IMR-90 (cell line): ENCODE measurements at regions of chrX and their contacts with region 1.

Region 1: GRCh38 chrX:68828740-68829552 is at the start of gene EFNB1:
- DNase-seq: peak; percentile 96
- ATAC-seq: peak; percentile 84
- H3K4me3 ChIP-seq: peak within 1 kb of the TSS; percentile 86
- H3K27ac ChIP-seq: peak within 1 kb of the TSS; percentile 39
- H3K4me1 ChIP-seq: peaks cover 3% of the 10 kb centered on the region; the same call in 1 of the 2 replicates
- H3K27me3 ChIP-seq: peaks cover 13% of the 10 kb centered on the region
- CTCF ChIP-seq: no peak
- POLR2A ChIP-seq: peak; percentile 95
- RAD21 ChIP-seq: 0 out of 2 replicates have a peak, but pooled peaks have one; percentile 19
- total RNA-seq, gene EFNB1: 17.8 and 17.9 TPM in 2 replicates

Region 2: GRCh38 chrX:68383540-68383939 is 445.4 kb before region 1 on chrX:
- CTCF ChIA-PET with region 1: no interaction called
- POLR2A ChIA-PET with region 1: no interaction called
- dilution Hi-C with region 1: no loop called
- in situ Hi-C with region 1: no loop called
- intact Hi-C with region 1: no loop called
- DNase-seq: no peak
- ATAC-seq: no peak
- H3K4me3 ChIP-seq: no peak overlapping the region
- H3K27ac ChIP-seq: no peak overlapping the region
- H3K4me1 ChIP-seq: no peaks in the 10 kb centered on the region
- H3K27me3 ChIP-seq: no peaks in the 10 kb centered on the region
- CTCF ChIP-seq: no peak
- POLR2A ChIP-seq: no peak
- RAD21 ChIP-seq: no peak

Region 3: GRCh38 chrX:68997911-68998310 is 169.0 kb after region 1 on chrX:
- CTCF ChIA-PET with region 1: no interaction called
- POLR2A ChIA-PET with region 1: no interaction called
- dilution Hi-C with region 1: no loop called
- in situ Hi-C with region 1: no loop called
- intact Hi-C with region 1: loop called (anchors 2 kb)
- DNase-seq: peak; percentile 83
- ATAC-seq: peak; percentile 69
- H3K4me3 ChIP-seq: no peak overlapping the region
- H3K27ac ChIP-seq: no peak overlapping the region
- H3K4me1 ChIP-seq: peaks cover 11% of the 10 kb centered on the region; the same call in 1 of the 2 replicates
- H3K27me3 ChIP-seq: peaks cover 16% of the 10 kb centered on the region
- CTCF ChIP-seq: no peak
- POLR2A ChIP-seq: no peak
- RAD21 ChIP-seq: no peak

Region 4: DNA sequence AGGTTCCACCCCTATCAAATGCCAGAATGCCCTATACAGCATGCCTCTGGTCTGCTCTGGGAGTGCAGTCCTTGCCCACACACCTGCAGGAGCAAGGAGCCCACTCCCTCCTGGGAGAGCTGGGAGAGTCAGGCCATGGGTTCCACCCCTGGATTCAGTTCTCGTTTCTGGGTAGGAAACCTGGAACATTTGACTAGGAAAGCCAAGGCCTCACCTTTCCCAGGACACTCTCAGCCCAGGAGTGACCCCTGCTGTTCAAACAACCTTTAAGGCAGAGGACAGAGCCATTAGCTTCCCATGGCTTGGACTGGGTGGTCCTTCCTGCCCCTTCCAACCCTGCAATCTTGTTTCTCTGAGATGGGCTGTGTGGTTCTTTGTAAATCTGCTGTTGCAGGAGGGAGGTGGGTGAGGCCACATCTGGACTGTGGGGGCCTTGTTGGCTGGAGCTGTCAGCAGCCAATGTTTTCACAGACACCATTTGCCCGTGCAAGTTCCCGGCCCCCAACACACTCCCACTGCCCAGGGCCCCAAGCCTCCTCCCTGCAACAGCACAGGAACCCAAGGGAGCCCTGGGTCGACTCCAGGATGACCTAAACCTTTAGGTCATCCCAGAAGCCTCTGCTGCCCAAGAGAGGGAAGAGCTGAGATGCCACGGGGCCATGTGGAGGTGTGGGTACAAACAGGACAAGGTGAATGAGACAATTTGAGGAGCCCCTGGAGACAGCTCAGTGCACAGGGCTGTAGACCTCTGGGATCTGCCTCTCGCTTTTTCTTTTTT is 231.9 kb after region 1 on chrX:
- CTCF ChIA-PET with region 1: interaction called, 17 read pairs
- POLR2A ChIA-PET with region 1: no interaction called
- dilution Hi-C with region 1: no loop called
- in situ Hi-C with region 1: no loop called
- intact Hi-C with region 1: loop called (anchors 1 kb)
- DNase-seq: peak; percentile 31
- ATAC-seq: peak; percentile 71; the same call in 1 of the 2 replicates
- H3K4me3 ChIP-seq: no peak overlapping the region
- H3K27ac ChIP-seq: no peak overlapping the region
- H3K4me1 ChIP-seq: no peaks in the 10 kb centered on the region
- H3K27me3 ChIP-seq: peaks cover 8% of the 10 kb centered on the region
- CTCF ChIP-seq: peak; percentile 50
- POLR2A ChIP-seq: no peak
- RAD21 ChIP-seq: peak; percentile 65

Region 5: GRCh38 chrX:69165087-69165651 is 336.2 kb after region 1 on chrX and contains the start of gene PJA1:
- CTCF ChIA-PET with region 1: no interaction called
- POLR2A ChIA-PET with region 1: no interaction called
- dilution Hi-C with region 1: no loop called
- in situ Hi-C with region 1: no loop called
- intact Hi-C with region 1: loop called (anchors 1 kb)
- DNase-seq: peak; percentile 57
- ATAC-seq: peak; percentile 94
- H3K4me3 ChIP-seq: peak within 1 kb of the TSS; percentile 84
- H3K27ac ChIP-seq: peak within 1 kb of the TSS; percentile 28
- H3K4me1 ChIP-seq: no peaks in the 10 kb centered on the region
- H3K27me3 ChIP-seq: peaks cover 8% of the 10 kb centered on the region
- CTCF ChIP-seq: no peak
- POLR2A ChIP-seq: peak; percentile 49
- RAD21 ChIP-seq: no peak
- total RNA-seq, gene PJA1: 24.4 and 26.7 TPM in 2 replicates

Region 6: GRCh38 chrX:69222103-69223090 is 393.5 kb after region 1 on chrX:
- CTCF ChIA-PET with region 1: interaction called, 19 read pairs
- POLR2A ChIA-PET with region 1: no interaction called
- dilution Hi-C with region 1: no loop called
- in situ Hi-C with region 1: loop called (anchors 5 kb)
- intact Hi-C with region 1: loop called (anchors 1 kb)
- DNase-seq: peak; percentile 53
- ATAC-seq: peak; percentile 79
- H3K4me3 ChIP-seq: no peak overlapping the region
- H3K27ac ChIP-seq: no peak overlapping the region
- H3K4me1 ChIP-seq: peaks cover 2% of the 10 kb centered on the region; the same call in 1 of the 2 replicates
- H3K27me3 ChIP-seq: peaks cover 27% of the 10 kb centered on the region
- CTCF ChIP-seq: peak; percentile 79
- POLR2A ChIP-seq: no peak
- RAD21 ChIP-seq: peak; percentile 86

Region 7: GRCh38 chrX:69387567-69388487 is 558.9 kb after region 1 on chrX:
- CTCF ChIA-PET with region 1: interaction called, 3 read pairs
- POLR2A ChIA-PET with region 1: no interaction called
- dilution Hi-C with region 1: no loop called
- in situ Hi-C with region 1: loop called (anchors 10 kb)
- intact Hi-C with region 1: no loop called
- DNase-seq: peak; percentile 21
- ATAC-seq: peak; percentile 85
- H3K4me3 ChIP-seq: no peak overlapping the region
- H3K27ac ChIP-seq: no peak overlapping the region
- H3K4me1 ChIP-seq: no peaks in the 10 kb centered on the region
- H3K27me3 ChIP-seq: peaks cover 56% of the 10 kb centered on the region
- CTCF ChIP-seq: peak; percentile 66
- POLR2A ChIP-seq: no peak
- RAD21 ChIP-seq: peak; percentile 72